AG04450 (cell line): ENCODE measurements at regions of chr10 and their contacts with region 1.

Region 1: DNA sequence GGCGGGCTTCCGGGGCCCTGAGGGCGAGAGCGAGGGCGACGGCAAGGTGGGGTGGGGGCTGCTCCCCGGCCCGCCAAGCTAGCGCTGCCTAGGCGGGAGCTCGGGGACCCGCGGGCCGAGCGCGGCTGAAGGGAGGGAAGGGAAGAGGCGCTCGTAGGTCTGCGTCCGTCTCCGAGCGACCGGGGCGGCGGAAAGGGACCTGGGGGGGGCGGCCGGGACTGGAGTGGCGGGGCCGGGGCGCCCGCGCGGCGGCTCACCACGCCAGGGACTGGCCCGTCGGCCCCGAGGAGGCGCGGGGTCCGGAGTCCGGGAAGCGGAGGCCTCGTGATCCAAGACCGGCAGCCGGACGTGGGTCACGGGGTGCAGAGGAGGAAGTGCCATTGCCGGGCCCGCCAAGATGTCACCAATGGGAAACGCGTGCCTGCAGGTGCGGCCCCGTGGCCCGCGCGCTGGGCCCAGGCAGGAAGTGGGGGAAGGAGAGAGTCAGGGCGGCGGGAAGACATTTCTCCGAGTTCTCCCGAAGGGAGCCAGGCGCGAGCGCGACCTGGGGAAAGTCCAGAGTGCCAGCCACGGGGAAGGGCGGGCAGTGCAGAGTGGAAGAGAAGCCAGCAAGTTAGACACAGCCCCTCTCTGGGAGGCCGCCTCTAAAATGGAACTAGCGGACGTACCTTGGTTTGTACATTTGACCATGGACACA is 11.9 kb downstream of the HNRNPF start:
- DNase-seq: no peak
- H3K4me3 ChIP-seq: peak overlapping the region; percentile 69
- H3K27ac ChIP-seq: peak overlapping the region; percentile 80
- H3K27me3 ChIP-seq: no peaks in the 10 kb centered on the region
- CTCF ChIP-seq: no peak

Region 2: GRCh38 chr10:43407576-43408330 is 10.7 kb after region 1 on chr10:
- CTCF ChIA-PET with region 1: interaction called, 4 read pairs
- POLR2A ChIA-PET with region 1: interaction called, 21 read pairs
- DNase-seq: no peak
- H3K4me3 ChIP-seq: peak overlapping the region; percentile 85
- H3K27ac ChIP-seq: peak overlapping the region; percentile 96
- H3K27me3 ChIP-seq: no peaks in the 10 kb centered on the region
- CTCF ChIP-seq: peak; percentile 57

Region 3: DNA sequence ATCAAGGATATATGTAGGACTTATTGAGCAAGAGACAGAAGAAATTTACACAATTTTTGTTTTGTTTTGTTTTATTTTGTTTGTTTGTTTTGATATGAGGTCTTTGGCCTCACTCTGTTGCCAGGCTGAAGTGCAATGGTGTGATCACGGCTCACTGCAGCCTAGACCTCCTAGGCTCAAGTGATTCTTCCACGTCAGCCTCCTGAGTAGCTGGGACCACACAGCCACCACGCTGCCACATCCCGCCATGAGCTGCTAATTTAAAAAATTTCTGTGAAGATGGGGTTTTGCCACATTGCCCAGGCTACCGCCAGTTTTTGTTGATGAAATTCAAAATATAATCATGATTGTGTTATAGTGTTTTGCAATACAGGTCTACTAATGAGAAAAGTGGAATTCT is 94.8 kb after region 1 on chr10:
- CTCF ChIA-PET with region 1: no interaction called
- POLR2A ChIA-PET with region 1: no interaction called
- DNase-seq: no peak
- H3K4me3 ChIP-seq: no peak overlapping the region
- H3K27ac ChIP-seq: no peak overlapping the region
- H3K27me3 ChIP-seq: no peaks in the 10 kb centered on the region
- CTCF ChIP-seq: no peak

Region 4: GRCh38 chr10:44253769-44254462 is 856.8 kb after region 1 on chr10:
- CTCF ChIA-PET with region 1: no interaction called
- POLR2A ChIA-PET with region 1: no interaction called
- DNase-seq: peak; percentile 75
- H3K4me3 ChIP-seq: no peak overlapping the region
- H3K27ac ChIP-seq: no peak overlapping the region
- H3K27me3 ChIP-seq: peaks cover 6% of the 10 kb centered on the region
- CTCF ChIP-seq: no peak

Region 5: DNA sequence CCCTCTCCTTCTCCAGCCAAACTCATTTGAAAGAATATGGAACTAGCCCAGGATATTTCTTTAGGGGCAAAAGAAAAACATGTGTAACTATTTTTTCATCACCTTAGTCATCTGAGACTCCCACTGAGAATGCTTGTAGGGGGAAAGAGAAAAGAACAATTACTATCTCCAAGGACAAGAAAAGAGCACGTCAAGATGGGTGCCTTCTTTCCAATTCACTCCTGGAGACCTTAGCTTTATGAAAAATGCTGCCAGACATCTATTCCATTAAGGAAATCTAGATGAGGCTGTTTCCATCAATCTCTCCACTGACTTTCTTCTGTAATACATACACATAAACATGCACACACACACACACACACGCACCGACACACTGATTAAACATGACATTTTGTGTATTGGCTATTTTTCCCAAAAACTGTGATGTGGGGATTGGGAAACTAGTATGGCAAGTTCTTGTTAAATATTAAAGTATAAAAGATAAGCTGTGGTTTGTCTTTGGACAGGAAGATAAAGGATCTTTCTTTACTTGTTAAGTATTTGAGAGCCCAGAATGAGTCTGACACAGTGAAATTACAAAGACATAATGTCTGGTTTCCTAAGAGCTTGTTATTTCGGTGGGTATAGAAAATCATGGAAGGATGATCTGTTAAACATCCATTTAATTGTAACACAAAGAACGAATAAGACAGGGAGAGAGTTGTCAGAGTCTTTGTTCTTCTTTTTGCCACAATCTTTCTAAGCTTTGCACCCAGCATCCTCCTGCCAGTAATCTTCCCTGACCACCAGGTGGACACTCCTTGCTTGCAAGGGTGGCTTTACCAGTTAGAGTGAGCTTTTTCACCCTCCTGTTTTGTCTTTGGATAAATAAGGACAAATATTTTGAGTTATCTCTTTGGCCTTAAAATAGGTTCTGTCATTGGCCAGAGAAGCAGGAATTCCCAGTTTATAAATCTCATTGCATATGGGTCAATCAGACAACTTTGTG is 1336.7 kb after region 1 on chr10:
- CTCF ChIA-PET with region 1: interaction called, 12 read pairs
- POLR2A ChIA-PET with region 1: no interaction called
- DNase-seq: no peak
- H3K4me3 ChIP-seq: no peak overlapping the region
- H3K27ac ChIP-seq: no peak overlapping the region
- H3K27me3 ChIP-seq: no peaks in the 10 kb centered on the region
- CTCF ChIP-seq: peak; percentile 66